Right ventricle myocardium superior (tissue), 1 donor: ENCODE measurements at regions of chr1 and their contacts with region 1.

Region 1: GRCh38 chr1:224644553-224645154 is 28.5 kb downstream of the CNIH3 start:
- DNase-seq: no peak
- ATAC-seq: peak; percentile 71

Region 2: DNA sequence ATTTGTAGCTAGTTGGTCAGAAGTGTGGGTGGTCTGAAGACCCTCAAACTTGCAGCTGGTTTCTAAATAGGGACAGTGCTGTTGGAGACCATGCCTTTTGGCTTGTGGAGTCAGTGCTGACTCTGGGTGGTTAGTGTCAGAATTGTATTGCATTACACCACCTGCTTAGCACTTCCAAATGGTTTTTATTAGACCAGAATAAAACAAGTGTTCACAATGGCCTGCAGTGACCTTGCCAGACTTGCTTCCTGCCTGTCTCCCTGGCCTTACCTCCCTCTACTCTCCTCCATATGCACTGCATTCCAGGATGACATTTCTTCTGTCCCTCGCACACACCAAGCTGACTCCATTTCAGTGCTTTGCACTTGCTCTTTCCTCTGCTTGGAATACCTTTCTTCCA is 101.2 kb before region 1 on chr1:
- intact Hi-C with region 1: no loop called
- DNase-seq: no peak
- ATAC-seq: no peak

Region 3: DNA sequence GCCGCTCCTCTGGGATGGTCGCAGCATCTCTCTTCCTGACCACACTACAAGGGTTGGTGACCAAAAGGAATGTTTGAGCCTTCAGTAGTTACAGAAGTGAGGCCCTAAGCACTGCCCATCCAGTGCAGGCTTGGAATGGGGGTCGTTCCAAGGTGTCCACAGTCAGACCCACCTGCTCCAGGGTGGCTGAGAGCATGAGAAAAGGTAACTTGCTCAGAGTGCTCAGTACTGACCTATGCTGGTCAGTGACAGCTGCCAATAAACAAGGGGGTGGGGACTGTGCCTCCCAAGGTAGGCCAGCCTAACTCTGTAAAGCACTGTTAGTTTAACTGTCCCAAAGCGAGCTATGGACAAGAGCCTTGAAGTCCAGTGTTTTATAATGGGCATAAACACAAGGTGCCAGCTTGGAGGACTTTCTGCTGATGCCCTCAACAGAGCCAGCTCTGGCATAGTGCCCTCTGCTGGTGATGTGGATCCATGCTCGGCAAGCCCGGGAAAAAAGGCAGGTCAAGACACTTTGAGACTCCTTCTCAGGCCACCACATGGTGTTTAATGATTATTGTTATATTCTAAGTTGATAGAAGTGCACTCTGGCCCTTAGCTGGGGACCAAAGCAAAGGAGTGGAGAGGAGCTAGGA is 206.7 kb after region 1 on chr1:
- intact Hi-C with region 1: loop called (anchors 5 kb)
- DNase-seq: peak; percentile 62
- ATAC-seq: peak; percentile 75